ENCODE measurements at regions of chr17 and their contacts with region 1.

Region 1: DNA sequence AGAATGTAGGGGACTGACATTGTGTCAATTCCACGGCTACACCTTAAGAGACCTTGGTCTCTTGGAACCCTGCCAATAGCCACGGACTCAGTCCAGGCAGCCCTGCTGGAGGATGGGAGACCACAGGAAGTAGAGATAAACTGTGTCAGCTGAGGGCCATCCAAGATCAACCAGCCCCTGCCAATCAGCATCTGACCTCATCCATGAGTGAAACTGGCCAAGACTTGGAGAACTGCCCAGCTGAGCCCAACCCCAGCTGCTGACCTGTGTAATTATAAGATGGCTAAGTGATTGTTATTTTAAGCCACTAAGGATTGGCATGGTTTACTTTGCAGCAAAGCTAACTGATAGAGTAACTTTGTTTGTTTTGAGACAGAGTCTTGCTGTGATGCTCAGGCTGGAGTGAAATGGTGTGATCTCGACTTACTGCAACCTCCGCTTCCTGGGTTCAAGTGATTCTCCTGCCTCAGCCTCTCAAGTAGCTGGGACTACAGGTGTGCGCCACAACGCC is 13.3 kb upstream of the YWHAE start:
- DNase-seq: no peak
- H3K4me3 ChIP-seq: no peak overlapping the region
- H3K27ac ChIP-seq: no peak overlapping the region
- H3K4me1 ChIP-seq: no peaks in the 10 kb centered on the region
- H3K27me3 ChIP-seq: no peaks in the 10 kb centered on the region
- CTCF ChIP-seq: no peak

Region 2: GRCh38 chr17:1206026-1206777 is 207.1 kb before region 1 on chr17:
- CTCF ChIA-PET with region 1: no interaction called
- POLR2A ChIA-PET with region 1: no interaction called
- intact Hi-C with region 1: no loop called
- DNase-seq: no peak
- H3K4me3 ChIP-seq: no peak overlapping the region
- H3K27ac ChIP-seq: no peak overlapping the region
- H3K4me1 ChIP-seq: no peaks in the 10 kb centered on the region
- H3K27me3 ChIP-seq: peaks cover under 1% of the 10 kb centered on the region
- CTCF ChIP-seq: no peak

Region 3: GRCh38 chr17:1379930-1380313 is 33.4 kb before region 1 on chr17:
- CTCF ChIA-PET with region 1: no interaction called
- POLR2A ChIA-PET with region 1: interaction called, 11 read pairs
- intact Hi-C with region 1: no loop called
- DNase-seq: no peak
- H3K4me3 ChIP-seq: no peak overlapping the region
- H3K27ac ChIP-seq: no peak overlapping the region
- H3K4me1 ChIP-seq: peaks cover 60% of the 10 kb centered on the region
- H3K27me3 ChIP-seq: no peaks in the 10 kb centered on the region
- CTCF ChIP-seq: no peak

Region 4: GRCh38 chr17:1396266-1396665 is 17.1 kb before region 1 on chr17:
- CTCF ChIA-PET with region 1: no interaction called
- POLR2A ChIA-PET with region 1: no interaction called
- intact Hi-C with region 1: no loop called
- DNase-seq: no peak
- H3K4me3 ChIP-seq: no peak overlapping the region
- H3K27ac ChIP-seq: no peak overlapping the region
- H3K4me1 ChIP-seq: peaks cover 35% of the 10 kb centered on the region
- H3K27me3 ChIP-seq: no peaks in the 10 kb centered on the region
- CTCF ChIP-seq: no peak

Region 5: GRCh38 chr17:1455797-1456599 is 42.7 kb after region 1 on chr17 and contains the start of gene CRK:
- CTCF ChIA-PET with region 1: no interaction called
- POLR2A ChIA-PET with region 1: interaction called, 13 read pairs
- intact Hi-C with region 1: no loop called
- DNase-seq: peak; percentile 98
- H3K4me3 ChIP-seq: peak within 1 kb of the TSS; percentile 100
- H3K27ac ChIP-seq: peak within 1 kb of the TSS; percentile 99
- H3K4me1 ChIP-seq: peaks cover 6% of the 10 kb centered on the region
- H3K27me3 ChIP-seq: no peaks in the 10 kb centered on the region
- CTCF ChIP-seq: peak; percentile 10; the same call in 1 of the 2 replicates
- total RNA-seq, gene CRK: 85.9 and 86.5 TPM in 2 replicates

Region 6: DNA sequence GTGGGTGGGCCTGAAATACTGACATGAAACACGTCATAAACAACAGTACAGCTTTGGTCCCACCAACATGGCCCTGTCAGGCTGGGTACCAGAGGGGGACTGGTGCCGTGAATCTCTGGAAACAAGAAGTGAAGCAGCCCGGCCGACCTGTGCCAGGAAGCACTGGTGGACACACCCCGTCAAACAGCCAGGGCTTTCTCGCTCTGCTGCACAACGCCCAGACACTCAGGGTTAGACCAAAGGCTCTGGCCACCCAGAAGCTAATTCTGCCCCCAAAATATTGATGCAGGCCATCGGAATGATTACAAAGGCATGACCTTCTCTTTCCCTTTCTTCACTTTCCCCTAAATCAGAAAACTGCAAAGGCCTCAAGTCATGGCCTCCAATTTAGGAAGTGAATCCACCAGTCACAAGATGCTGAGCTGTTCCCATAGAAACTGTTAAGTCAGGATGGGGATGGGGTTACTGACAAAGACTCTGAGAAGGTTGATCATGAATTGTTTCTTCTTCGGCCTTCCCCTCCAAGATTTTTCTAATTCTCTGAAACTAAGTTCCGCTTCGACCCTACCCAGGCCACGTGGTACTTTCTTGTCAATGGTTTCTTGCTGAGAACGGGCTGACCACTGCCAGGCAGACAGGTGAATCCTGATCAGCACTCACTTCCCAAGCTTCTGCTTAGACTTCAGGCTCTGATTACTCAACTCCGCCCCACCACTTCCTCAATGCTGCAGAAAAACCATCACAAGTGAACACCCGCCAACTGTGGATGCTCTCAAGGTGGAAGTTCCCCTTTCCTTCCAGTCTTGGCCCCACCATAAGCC is 142.5 kb after region 1 on chr17:
- CTCF ChIA-PET with region 1: no interaction called
- POLR2A ChIA-PET with region 1: no interaction called
- intact Hi-C with region 1: no loop called
- DNase-seq: no peak
- H3K4me3 ChIP-seq: no peak overlapping the region
- H3K27ac ChIP-seq: no peak overlapping the region
- H3K4me1 ChIP-seq: peaks cover 8% of the 10 kb centered on the region
- H3K27me3 ChIP-seq: no peaks in the 10 kb centered on the region
- CTCF ChIP-seq: no peak

Measured in A673 (cell line).